ENCODE measurements at regions of chr17 and their contacts with region 1.

Region 1: DNA sequence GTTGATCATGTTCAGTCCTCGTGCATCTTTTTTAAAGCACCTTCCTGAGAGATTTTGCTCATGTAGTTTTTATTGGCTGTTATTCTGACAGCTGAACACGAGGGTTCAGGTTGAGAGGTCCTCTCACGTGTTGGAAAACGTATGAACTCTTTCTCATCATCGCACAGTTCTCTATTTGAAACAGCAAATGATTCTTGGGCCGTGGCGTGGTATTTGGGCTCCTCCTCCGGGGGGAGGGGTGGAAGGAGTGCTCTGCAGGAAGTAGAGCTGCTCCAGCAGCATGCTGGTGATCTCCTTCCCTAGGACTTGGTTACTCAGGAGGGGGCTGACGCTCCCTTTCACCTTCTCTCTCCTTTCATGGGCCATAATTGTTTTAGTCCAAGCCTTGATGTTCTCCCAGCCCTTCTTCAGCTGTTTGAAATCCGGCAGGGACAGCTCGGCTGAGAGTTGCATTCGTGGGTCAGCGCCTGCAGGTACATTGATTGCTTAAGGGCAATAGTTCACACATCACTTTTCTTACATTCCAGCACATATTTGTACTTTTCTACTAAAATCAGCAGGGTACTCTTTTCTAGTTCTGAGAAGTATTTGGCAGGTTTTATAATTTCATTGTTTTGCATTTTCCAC is 70.5 kb downstream of the KSR1 start:
- DNase-seq: peak; percentile 88
- H3K4me3 Mint-ChIP-seq: peak overlapping the region; percentile 76
- H3K27ac Mint-ChIP-seq: peak overlapping the region; percentile 89
- H3K4me1 Mint-ChIP-seq: peaks cover 82% of the 10 kb centered on the region
- H3K27me3 Mint-ChIP-seq: no peaks in the 10 kb centered on the region

Region 2: DNA sequence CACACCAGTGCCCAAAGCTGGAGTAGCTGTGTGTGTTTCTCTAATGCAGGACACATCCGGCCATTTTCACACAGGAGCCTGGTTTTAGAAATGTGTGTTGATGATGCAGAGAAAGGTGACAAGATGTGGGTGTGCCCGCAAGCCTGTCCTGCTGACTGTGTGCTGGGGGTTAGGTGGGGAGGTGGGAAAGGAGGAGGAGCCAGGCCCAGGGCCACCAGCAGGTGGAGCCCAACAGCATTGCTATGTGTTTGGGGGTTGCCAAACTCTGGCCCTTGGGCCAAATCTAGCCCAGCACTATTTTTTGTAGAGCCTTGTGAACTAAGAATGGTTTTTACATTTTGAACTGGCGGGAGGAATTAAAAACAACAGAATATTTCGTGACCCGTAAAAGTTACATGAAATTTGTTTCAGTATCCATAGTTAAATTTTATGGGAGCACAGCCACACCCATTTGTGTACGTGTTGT is 42.6 kb after region 1 on chr17:
- intact Hi-C with region 1: loop called (anchors 5 kb)
- DNase-seq: peak; percentile 81
- H3K4me3 Mint-ChIP-seq: no peak overlapping the region
- H3K27ac Mint-ChIP-seq: peak overlapping the region; percentile 48
- H3K4me1 Mint-ChIP-seq: peaks cover 69% of the 10 kb centered on the region
- H3K27me3 Mint-ChIP-seq: no peaks in the 10 kb centered on the region

Region 3: DNA sequence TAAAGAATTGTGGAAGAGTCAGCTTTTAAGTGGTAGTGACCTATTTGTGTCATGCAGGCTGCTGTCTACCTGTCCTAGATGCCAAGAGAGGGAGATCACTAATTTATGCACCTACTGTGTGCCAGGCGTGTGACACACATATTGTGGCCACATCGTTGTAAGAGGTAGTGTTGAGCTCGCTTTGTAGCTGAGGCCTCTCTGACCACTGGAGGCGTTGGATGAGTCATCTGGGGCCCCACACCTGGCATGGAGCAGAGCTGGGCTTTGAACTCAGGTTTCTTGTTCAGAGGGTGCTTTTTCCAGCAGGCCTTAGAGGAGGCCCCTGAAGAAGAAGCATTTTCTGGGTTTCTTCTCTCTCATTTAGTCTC is 52.0 kb after region 1 on chr17:
- intact Hi-C with region 1: loop called (anchors 2 kb)
- DNase-seq: peak; percentile 86
- H3K4me3 Mint-ChIP-seq: peak overlapping the region; percentile 40
- H3K27ac Mint-ChIP-seq: peak overlapping the region; percentile 86
- H3K4me1 Mint-ChIP-seq: peaks cover 72% of the 10 kb centered on the region
- H3K27me3 Mint-ChIP-seq: no peaks in the 10 kb centered on the region